Activated CD4-positive, alpha-beta memory T cell treated with anti-CD3 and anti-CD28 coated beads for 36 hours (primary cell): ENCODE measurements at regions of chr22 and their contacts with region 1.

Region 1: GRCh38 chr22:37019309-37020125 is at the starts of genes MPST and TST:
- DNase-seq: peak; percentile 50
- H3K4me3 Mint-ChIP-seq: peak within 1 kb of the TSS; percentile 89
- H3K27ac Mint-ChIP-seq: no peak within 1 kb of the TSS
- H3K4me1 Mint-ChIP-seq: peaks cover 9% of the 10 kb centered on the region
- H3K27me3 Mint-ChIP-seq: peaks cover 3% of the 10 kb centered on the region
- total RNA-seq, gene MPST: 16.9 to 17.6 TPM
- total RNA-seq, gene TST: 5.5 TPM

Region 2: GRCh38 chr22:36966851-36967540 is 52.5 kb before region 1 on chr22:
- CTCF ChIA-PET with region 1: no interaction called
- POLR2A ChIA-PET with region 1: no interaction called
- intact Hi-C with region 1: no loop called
- DNase-seq: no peak
- H3K4me3 Mint-ChIP-seq: no peak overlapping the region
- H3K27ac Mint-ChIP-seq: no peak overlapping the region
- H3K4me1 Mint-ChIP-seq: no peaks in the 10 kb centered on the region
- H3K27me3 Mint-ChIP-seq: no peaks in the 10 kb centered on the region

Region 3: DNA sequence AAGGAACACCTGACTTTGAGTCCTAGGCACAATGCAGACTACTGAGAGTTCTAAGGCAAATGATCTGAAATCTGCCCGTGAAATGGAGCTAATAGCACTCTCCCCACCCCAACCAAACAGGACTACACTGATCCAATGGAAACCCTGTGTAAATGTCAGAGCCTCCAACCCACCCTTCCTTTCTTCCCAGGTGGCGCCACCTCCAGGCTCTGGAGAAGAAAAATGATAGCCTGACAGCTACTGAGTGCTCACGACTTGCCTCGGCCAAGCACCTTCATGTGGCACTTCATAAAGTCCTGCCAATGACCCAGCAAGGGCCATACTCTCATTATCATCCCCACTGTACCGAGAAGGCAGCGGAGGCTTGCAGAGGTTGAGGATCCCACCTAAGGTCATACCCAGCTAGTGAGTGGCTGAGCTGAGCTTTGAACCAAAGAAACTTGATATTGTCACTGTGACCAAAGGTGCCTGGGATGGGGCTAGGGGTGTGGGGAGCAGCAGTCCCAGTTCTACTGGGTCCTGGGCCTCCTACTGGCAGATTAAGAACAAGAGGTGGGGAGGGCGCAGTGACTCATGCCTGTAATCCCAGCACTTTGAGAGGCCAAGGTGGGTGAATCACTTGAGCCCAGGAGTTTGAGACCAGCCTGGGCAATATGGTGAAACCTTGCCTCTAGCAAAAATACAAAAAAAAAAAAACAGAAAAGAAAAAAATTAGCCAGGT is 20.7 kb before region 1 on chr22:
- CTCF ChIA-PET with region 1: interaction called, 11 read pairs
- POLR2A ChIA-PET with region 1: no interaction called
- intact Hi-C with region 1: no loop called
- DNase-seq: peak; percentile 41
- H3K4me3 Mint-ChIP-seq: no peak overlapping the region
- H3K27ac Mint-ChIP-seq: no peak overlapping the region
- H3K4me1 Mint-ChIP-seq: no peaks in the 10 kb centered on the region
- H3K27me3 Mint-ChIP-seq: peaks cover 3% of the 10 kb centered on the region

Region 4: DNA sequence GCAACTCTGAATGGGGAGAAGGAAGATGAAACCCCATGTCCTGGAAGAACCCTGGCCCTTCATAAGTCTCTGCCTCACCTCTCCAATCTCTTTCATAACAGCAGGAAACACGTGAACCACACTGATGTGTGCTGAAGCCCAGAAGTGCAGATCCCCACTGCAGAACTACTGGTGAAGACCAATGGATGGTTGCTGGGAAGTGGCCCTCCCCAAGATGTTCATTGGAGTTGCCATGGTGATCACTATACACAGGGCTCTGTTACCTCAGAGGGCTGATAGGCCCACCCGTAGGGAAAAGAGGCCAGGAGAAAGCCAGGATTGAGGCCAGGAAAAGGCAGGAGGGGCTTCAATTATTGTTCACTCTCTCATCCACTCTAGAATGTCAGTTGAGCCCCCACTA is 11.9 kb before region 1 on chr22:
- CTCF ChIA-PET with region 1: interaction called, 14 read pairs
- POLR2A ChIA-PET with region 1: no interaction called
- intact Hi-C with region 1: no loop called
- DNase-seq: no peak
- H3K4me3 Mint-ChIP-seq: no peak overlapping the region
- H3K27ac Mint-ChIP-seq: no peak overlapping the region
- H3K4me1 Mint-ChIP-seq: no peaks in the 10 kb centered on the region
- H3K27me3 Mint-ChIP-seq: peaks cover 13% of the 10 kb centered on the region